ENCODE measurements at regions of chr6 and their contacts with region 1.

Region 1: DNA sequence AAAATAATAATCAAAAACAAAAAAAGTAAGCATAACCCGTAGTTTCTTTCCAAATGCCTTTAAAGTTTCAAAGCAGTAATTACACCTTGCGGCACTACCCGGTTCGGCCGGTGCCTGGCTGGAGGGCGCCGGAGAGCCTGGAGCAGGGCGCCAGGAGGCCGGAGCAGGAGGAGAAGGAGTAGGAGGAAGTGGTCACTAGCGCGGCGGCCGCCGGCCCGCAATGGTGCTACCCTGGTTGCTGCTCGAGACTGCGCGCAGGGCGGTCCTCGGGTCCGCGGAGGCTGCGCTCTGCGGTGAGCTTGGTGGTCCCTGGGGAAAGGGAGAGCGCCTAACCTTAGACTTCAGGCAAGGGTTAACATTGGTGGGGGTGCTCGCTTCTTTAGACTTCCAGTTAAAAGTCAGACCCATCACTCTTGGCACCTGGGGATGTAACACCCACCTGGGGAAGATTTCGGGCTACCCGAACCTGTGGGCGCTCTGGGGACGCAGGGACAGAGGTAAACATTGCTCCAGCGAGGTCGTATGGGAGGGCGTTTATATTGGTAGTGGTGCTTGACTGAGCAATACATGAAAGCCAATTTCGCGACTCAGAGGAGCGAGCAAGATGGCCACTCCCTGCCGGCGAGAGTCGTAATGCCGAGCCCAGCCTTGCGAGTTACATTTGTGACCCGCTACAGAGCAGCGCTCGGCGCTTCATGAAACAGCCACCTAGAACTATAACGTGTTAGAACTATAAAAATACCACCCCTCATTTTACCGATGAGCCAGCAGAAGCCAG is 5.8 kb upstream of the USP45 start:
- DNase-seq: peak; percentile 86
- ATAC-seq: peak; percentile 96 to 98

Region 2: DNA sequence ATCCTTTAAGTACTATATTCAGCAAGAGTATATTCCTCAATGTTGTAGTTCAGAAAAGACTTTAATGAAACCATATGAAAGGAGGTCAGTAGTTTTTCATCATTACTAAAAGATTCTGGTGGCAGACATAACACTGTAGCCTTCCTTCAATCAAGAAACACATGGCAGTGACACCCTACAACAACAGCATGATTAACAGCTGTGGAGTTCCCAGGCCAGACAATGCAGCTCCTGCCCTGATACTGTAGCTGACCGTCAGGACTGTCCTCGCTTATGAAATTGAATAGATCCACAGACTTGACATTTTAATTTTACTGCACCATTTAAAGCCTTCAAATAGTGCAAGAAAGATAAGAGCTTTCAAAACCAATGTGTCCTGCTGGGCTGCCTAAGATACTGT is 49.4 kb before region 1 on chr6:
- intact Hi-C with region 1: no loop called
- DNase-seq: no peak
- ATAC-seq: no peak

Region 3: DNA sequence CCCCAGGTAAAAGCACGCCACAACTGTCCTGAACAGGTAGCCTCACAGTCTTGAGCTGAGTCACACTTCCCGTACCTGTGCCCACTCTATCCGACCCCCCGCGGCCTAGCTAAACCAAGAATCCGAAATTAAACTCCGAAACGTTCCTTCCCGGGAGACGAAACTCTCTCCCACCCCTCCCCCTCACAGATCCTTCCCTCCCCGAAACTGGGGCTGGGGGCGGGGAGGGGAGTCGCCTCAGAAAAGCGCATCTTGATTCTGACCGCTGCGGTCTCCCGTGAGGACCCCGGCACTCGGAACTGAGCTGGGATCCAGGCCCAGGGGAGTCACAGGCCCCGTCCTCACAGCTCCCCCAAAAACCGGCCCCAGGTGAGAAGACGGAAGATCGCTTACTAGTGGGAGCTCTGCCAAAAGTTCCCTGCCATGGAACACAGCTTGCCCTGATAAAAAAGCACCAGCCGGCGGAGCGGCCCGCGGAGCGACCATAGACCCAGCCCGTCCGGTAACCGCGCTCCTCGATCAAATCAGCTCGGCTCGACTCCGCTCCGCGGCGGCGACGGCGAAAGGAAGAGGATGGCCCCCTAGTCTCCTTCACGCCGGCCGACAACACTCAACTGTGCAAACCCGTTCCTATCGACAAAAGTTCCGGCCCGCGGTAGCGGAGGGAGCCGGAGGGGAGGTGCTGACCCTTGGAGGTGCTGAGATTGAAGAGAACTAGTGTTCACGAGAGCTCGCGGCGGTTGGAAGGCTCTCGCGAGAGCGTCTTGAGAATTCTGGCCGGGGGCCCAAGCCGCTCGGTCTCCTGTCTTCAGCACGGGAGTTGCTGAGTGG is 47.3 kb after region 1 on chr6 and contains the start of gene CCNC:
- intact Hi-C with region 1: loop called in 1 of 2 experiments (anchors 5 kb)
- DNase-seq: peak; percentile 93
- ATAC-seq: peak; percentile 99 to 100
- total RNA-seq, gene CCNC: 20.6 to 28.9 TPM